ENCODE measurements at regions of chr13 and their contacts with region 1.

Region 1: DNA sequence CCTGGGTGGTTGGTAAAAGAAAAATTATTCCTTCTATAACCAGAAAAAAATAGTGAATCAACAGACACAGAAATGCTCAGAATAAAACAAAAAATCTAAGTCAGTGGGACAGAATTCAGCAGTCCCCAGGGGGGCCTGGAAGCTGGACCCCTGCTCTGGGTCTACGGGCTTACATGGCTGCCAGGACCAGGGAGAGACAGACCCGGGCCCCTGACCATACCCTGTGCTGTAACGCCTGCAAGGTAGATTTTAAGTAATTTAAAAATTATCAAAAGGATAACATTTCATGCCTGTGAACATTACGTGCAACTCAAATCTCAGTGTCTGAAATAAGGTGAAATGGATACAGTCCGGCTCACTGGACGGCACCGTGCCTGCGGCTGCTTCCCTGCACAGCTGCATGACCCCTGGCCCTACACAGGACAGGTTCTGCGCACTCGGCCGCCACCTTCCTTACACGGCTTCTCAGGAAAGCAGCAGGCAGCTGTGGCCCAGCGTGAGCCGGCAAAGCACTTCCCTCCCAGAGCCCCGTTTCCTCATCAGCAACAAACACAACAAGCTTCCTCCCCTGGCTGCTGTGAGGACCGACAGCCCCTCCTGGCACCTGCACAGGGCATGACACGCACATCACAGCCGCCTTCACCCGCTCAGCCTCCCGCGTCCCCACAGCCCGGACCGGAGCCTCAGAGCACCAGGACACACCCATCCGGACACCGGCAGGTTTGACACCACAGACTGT is 22.2 kb downstream of the RASA3 start:
- DNase-seq: peak; percentile 81 to 93 (median 91)
- H3K4me3 ChIP-seq: no peak overlapping the region
- H3K27ac ChIP-seq: no peak overlapping the region
- H3K4me1 ChIP-seq: peaks cover 0 to 42% (median 21%) of the 10 kb centered on the region in 4 experiments
- H3K27me3 ChIP-seq: no peaks in the 10 kb centered on the region

Region 2: GRCh38 chr13:113954046-113954835 is 156.0 kb before region 1 on chr13:
- CTCF ChIA-PET with region 1: interaction called, 10 read pairs
- POLR2A ChIA-PET with region 1: interaction called, 3 read pairs
- DNase-seq: peak in 1 of 3 donors; percentile 7
- H3K4me3 ChIP-seq: no peak overlapping the region
- H3K27ac ChIP-seq: no peak overlapping the region
- H3K4me1 ChIP-seq: peaks cover 0 to 13% (median 8%) of the 10 kb centered on the region in 4 experiments
- H3K27me3 ChIP-seq: no peaks in the 10 kb centered on the region

Measured in common myeloid progenitor, CD34-positive (primary cell).